ENCODE measurements at regions of chr4 and their contacts with region 1.

Region 1: GRCh38 chr4:86218742-86219481 is 140.9 kb downstream of the MAPK10 start:
- DNase-seq: no peak
- ATAC-seq: no peak
- H3K4me3 ChIP-seq: no peak overlapping the region
- H3K27ac ChIP-seq: no peak overlapping the region
- H3K4me1 ChIP-seq: no peaks in the 10 kb centered on the region
- H3K27me3 ChIP-seq: no peaks in the 10 kb centered on the region
- CTCF ChIP-seq: no peak

Region 2: DNA sequence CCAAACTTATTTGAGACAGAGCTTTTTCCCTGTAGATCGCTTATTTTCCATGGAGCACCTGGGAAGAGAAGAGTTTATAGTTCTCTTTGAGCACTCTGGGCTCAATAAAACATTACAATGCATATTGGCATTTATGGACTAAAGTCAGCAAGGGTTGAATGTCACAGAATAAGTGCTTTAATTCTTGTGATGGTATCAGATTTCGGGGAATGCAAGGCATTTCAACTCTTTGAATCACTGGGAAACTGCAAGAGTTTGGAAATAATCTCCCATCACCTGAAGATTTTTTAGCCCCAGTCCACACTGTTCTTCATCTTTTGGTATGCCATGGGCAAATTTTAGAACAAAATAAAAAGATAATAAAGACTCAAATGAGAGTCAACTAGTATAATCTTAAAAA is 1140.9 kb before region 1 on chr4:
- intact Hi-C with region 1: loop called in 1 of 2 experiments (anchors 10 kb)
- DNase-seq: no peak
- ATAC-seq: no peak
- H3K4me3 ChIP-seq: no peak overlapping the region
- H3K27ac ChIP-seq: no peak overlapping the region
- H3K4me1 ChIP-seq: no peaks in the 10 kb centered on the region
- H3K27me3 ChIP-seq: no peaks in the 10 kb centered on the region
- CTCF ChIP-seq: no peak

Region 3: GRCh38 chr4:86155766-86156165 is 63.1 kb before region 1 on chr4:
- intact Hi-C with region 1: no loop called
- DNase-seq: no peak
- ATAC-seq: no peak
- H3K4me3 ChIP-seq: no peak overlapping the region
- H3K27ac ChIP-seq: no peak overlapping the region
- H3K4me1 ChIP-seq: no peaks in the 10 kb centered on the region
- H3K27me3 ChIP-seq: no peaks in the 10 kb centered on the region
- CTCF ChIP-seq: no peak